Colonic mucosa (tissue), 4 donors: ENCODE measurements at regions of chr4 and their contacts with region 1.

Region 1: DNA sequence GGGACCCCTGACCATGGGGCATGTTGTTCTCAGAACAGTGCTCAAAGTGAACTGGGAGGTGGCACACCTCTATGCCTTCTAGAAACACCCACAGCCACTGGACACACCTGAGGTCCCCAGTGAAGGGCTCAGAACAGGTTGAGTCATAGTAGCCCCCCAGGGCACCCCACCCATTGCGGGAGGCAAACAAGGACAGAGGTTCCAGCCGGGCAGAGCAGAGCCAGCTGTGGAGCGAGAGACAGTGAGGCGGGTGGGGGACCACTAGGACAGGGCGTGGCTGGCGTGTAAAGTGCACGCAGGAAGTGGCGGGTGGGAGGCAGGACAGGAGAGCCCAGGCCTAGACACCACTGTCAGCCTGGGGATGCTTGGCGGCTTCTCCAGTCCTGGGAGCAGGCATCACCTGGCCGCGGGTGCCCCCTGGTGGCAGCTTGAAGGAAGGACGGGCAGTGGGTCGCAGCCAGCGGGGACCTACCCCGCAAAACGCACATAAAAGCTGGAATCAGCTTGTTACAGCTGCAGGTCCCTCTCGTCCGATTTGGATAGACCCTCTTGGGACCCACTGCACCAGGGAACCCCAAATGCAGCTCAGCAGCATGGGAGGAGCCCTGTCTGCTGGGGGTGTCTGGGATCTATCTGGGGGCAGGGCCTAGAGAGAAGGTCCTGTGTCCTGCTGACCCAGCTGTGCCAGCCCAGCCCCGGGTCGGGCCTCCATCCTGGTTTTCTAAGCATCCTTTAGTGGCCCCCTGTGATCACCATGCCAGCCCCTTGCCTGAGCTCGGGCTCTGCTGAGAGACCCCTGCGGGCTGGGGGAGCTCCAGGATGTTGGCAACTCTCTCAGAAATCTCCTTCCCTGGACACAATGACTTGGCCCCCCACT is 57.6 kb downstream of the WFS1 start:
- DNase-seq: peak; percentile 77
- H3K4me3 ChIP-seq: no peak overlapping the region
- H3K27ac ChIP-seq: no peak overlapping the region
- H3K4me1 ChIP-seq: no peaks in the 10 kb centered on the region
- H3K27me3 ChIP-seq: no peaks in the 10 kb centered on the region
- CTCF ChIP-seq: peak; percentile 93

Region 2: GRCh38 chr4:6134612-6135220 is 192.6 kb before region 1 on chr4:
- intact Hi-C with region 1: no loop called
- DNase-seq: no peak
- H3K4me3 ChIP-seq: no peak overlapping the region
- H3K27ac ChIP-seq: no peak overlapping the region
- H3K4me1 ChIP-seq: no peaks in the 10 kb centered on the region
- H3K27me3 ChIP-seq: no peaks in the 10 kb centered on the region
- CTCF ChIP-seq: no peak

Region 3: DNA sequence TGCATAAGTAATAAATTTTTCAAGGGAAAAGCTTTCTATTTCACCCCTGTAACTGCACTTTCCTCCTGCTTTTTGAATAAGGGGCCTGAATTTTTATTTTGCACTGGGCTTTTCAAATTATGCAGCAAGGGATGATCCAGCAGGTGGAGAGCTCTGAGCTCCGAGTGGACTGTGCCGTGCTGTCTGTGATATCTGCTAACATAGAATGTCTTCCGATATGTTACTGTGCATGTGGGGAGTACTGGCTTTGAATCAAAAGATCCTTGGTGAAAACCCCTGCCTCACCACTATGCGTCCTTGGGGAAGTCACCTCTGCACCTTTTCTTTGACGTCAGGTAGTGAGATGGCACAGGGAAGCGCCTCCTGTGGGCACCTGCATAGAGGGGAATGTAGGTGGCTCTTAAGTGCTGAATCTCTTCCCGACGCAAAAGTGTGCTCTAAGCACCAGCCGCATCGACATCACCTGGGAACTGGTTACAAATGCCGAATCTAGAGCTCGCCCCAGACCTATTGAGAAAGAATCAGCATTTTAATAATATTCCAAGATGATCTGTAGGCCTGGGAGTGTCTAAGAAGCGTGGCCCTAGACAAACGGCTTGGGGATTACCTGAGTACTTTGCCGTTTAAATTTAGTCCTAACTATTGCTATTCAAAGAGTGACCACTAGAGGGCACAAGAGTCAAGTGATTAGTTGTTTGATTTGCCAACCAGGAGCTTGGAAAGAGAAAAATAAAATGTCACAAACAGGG is 76.9 kb before region 1 on chr4:
- intact Hi-C with region 1: loop called (anchors 2 kb)
- DNase-seq: no peak
- H3K4me3 ChIP-seq: no peak overlapping the region
- H3K27ac ChIP-seq: no peak overlapping the region
- H3K4me1 ChIP-seq: no peaks in the 10 kb centered on the region
- H3K27me3 ChIP-seq: no peaks in the 10 kb centered on the region
- CTCF ChIP-seq: peak; percentile 83

Region 4: DNA sequence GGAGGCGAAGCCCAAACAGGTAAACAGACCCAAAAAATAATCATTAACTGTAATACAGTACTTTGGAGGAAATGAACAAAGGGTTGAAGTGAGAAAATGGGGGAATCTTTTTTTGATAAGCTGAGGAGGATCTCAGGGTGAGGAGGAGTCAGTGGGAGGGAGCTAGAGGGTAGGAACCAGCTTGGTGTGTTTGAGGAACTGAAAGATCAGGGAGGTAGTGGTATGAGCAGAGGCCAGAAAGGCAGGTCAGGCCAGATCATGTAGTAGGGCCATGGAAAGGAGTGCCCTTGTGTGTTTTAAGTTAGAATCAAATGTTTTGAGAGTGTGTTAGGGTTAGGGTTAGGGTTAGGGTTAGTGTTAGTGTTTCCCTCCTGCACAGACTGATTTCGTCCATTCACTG is 96.3 kb after region 1 on chr4:
- intact Hi-C with region 1: no loop called
- DNase-seq: no peak
- H3K4me3 ChIP-seq: no peak overlapping the region
- H3K27ac ChIP-seq: no peak overlapping the region
- H3K4me1 ChIP-seq: no peaks in the 10 kb centered on the region
- H3K27me3 ChIP-seq: no peaks in the 10 kb centered on the region
- CTCF ChIP-seq: no peak

Region 5: DNA sequence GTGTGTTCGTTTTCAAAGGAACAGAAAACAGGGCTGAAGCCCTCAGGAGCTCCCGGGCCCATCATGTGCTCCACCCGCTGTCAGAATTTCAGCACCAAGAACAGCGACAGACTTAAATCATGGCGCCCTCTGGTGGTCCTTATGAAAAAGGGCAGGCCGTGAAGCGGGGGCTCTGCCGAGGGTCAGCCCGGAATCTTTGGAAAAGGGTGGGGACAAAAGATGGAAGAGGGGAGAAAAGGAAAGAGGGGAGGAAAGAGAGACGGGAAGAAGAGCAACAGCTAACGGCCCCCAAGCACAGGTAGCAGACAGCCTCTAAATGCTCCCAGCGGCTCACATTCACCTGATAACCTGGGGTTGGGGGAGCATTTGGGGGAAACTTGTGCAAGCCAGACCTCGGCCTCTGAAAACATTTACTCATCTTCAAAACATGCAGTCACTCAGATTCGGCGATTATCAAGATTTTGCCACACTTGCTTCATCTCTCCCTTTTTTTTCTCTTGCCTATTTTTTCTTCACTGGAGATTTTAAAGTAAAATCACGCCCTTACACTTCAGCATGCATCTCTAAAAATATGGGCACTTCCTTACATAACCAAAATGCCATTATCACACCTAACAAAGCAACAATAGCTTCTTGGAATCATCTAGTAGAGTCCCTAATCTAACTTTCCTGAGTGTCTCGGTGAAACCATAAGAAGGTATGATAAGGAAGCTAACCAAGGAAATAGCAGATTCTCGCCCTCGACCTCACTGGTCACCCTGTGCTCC is 219.6 kb after region 1 on chr4:
- intact Hi-C with region 1: loop called (anchors 5 kb)
- DNase-seq: peak; percentile 27
- H3K4me3 ChIP-seq: no peak overlapping the region
- H3K27ac ChIP-seq: no peak overlapping the region
- H3K4me1 ChIP-seq: no peaks in the 10 kb centered on the region
- H3K27me3 ChIP-seq: no peaks in the 10 kb centered on the region
- CTCF ChIP-seq: peak; percentile 71

Region 6: DNA sequence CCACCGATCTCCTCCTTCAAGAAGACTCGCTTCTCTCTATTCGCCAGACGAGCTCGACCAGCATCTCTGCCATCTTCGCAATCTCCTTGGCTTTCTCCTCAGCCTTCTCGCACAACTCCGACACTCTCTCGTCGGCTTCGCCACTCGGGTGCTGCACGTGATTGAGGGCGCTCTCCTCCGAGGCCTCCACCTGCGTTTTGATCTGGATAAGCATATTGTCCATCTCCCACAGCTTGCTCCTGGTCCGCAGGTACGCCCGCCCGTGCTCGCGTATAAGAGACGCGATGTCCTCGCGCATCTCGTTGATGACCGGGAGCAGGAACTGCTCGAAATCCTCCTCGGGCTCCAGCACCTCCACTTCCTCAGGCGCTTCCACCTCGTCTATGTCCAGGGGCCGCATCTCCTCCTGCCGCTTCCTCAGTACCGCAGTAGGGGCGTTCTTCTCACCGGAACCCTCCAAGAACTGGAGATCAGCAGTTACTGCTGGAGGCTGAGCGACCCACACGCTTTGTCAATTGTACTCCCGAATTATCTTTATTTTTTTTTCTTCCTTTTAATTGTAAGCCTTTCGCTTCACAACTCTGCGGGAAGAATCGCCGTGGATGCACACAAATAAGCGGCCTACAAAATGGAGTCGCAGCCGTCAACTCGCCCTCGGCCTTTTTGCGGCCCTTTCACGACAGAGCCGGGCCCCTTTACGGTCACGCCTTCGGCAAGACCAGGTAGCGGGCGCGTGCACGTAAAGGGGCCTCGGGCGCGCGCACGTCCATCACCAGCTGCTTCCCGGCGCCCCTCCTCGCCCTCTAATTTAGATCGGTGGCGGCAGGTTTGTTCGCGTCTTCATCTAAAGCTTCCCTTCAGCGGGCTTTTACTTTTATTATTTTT is 382.2 kb after region 1 on chr4 and contains the start of gene MRFAP1L1:
- intact Hi-C with region 1: no loop called
- DNase-seq: peak; percentile 98
- H3K4me3 ChIP-seq: peak within 1 kb of the TSS; percentile 73
- H3K27ac ChIP-seq: peak within 1 kb of the TSS; percentile 88
- H3K4me1 ChIP-seq: peaks cover 9% of the 10 kb centered on the region
- H3K27me3 ChIP-seq: no peaks in the 10 kb centered on the region
- CTCF ChIP-seq: no peak
- total RNA-seq, gene MRFAP1L1: 33.6 to 37.4 TPM